H1 (cell line): ENCODE measurements at regions of chr17 and their contacts with region 1.

Region 1: DNA sequence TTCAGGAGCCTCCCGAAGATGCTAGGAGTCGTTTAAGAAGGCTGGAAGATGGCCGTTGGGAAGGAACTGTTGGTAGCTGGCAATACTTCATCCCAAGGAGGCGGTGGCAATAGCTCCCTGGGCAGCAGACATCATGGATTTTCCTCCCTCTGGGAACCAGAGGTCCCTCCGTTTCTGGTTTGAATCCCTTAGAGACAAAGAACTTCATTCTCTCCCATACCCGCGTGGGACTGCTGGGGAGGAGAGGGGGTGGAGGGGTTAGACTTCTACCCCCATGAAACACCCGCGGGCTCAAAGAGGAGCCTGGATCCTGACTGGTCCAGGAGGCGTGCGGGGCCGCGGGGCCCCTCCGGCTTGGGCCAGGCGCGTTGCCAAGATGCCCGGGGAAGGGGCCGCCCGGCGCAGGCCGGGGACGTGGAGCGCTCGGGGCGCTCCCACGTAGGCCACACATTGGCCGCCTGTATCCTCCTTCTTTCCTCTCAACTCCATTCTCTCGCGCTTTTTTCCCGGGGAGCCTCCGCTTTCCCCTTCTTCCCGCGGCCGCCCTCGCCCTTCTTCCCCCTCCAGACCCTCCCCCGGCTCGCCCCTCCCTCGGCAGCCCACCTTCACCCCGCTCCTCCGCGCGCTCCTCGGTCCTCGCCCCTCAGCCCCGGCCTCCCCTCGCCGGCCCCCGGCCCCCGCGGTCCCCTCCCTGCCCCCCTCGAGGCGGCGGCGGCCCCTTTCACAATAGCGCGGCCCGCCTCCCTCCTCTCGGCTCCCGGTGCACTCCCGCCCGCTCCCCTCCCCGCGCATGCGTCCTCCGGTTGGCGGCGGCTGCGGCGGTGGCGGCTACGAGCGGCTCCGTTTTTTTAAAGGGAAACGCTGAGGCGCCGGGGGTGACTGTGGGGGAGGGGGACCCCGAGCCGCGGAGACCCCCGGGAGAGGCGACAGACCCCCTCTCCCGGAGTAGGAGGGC is at the start of gene MSL1:
- DNase-seq: peak in 1 of 2 experiments; percentile 88
- H3K4me3 ChIP-seq: peak within 1 kb of the TSS; percentile 80 to 91 (median 86)
- H3K27ac ChIP-seq: peak within 1 kb of the TSS; percentile 84
- H3K4me1 ChIP-seq: peaks cover 0 to 3% (median under 1%) of the 10 kb centered on the region in 4 experiments; a peak in 2 of 7 replicates
- H3K27me3 ChIP-seq: no peaks in the 10 kb centered on the region; a peak in 1 of 7 replicates
- CTCF ChIP-seq: no peak
- EP300 ChIP-seq: 0 out of 3 replicates have a peak, but pooled peaks of 1 of the 2 experiments have one; percentile 8
- POLR2A ChIP-seq: peak in 1 of 2 experiments; percentile 37; a peak in 1 of 3 replicates
- RAD21 ChIP-seq: no peak
- total RNA-seq, gene MSL1: 66.5 and 69.2 TPM in 2 replicates

Region 2: GRCh38 chr17:40062329-40063186 is 58.9 kb before region 1 on chr17 and contains the start of gene THRA:
- CTCF ChIA-PET with region 1: interaction called, 4 read pairs
- POLR2A ChIA-PET with region 1: interaction called, 17 read pairs
- DNase-seq: peak in 1 of 2 experiments; percentile 89
- H3K4me3 ChIP-seq: peak within 1 kb of the TSS; percentile 78 to 87 (median 81)
- H3K27ac ChIP-seq: peak within 1 kb of the TSS; percentile 60; the same call in 1 of the 2 replicates
- H3K4me1 ChIP-seq: peaks cover 21 to 46% (median 31%) of the 10 kb centered on the region in 4 experiments
- H3K27me3 ChIP-seq: peaks cover 0 to 15% (median 10%) of the 10 kb centered on the region in 4 experiments; a peak in 6 of 7 replicates
- CTCF ChIP-seq: no peak; a peak in 1 of 4 replicates
- EP300 ChIP-seq: no peak
- POLR2A ChIP-seq: no peak
- RAD21 ChIP-seq: no peak
- total RNA-seq, gene THRA: 10.2 and 11.8 TPM in 2 replicates

Region 3: GRCh38 chr17:40139566-40140058 is 18.2 kb after region 1 on chr17:
- CTCF ChIA-PET with region 1: interaction called, 135 read pairs
- POLR2A ChIA-PET with region 1: interaction called, 90 read pairs
- DNase-seq: no peak
- H3K4me3 ChIP-seq: peak overlapping the region; percentile 51 to 88 (median 68)
- H3K27ac ChIP-seq: peak overlapping the region; percentile 84
- H3K4me1 ChIP-seq: peaks cover 0 to 4% (median 1%) of the 10 kb centered on the region in 4 experiments; a peak in 2 of 7 replicates
- H3K27me3 ChIP-seq: no peaks in the 10 kb centered on the region
- CTCF ChIP-seq: no peak
- EP300 ChIP-seq: no peak
- POLR2A ChIP-seq: no peak
- RAD21 ChIP-seq: no peak

Region 4: DNA sequence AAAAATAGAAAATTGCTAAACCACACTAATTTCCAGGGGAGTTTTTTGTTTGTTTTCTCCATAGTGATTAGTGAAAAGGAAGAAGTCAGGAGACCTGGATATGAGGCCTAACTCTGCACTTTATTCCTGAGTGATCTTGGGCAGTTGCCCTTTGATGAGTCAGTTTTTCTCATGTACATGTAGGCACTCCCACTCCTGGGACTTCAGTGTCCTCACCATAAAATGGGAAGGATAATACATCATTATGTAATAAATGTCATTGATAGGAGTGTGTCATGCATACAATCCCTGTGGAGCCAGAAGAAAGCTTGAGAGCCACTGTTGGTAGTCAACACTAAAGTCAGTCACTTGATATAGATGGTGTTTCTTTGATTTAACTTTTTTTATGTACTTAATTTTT is 130.1 kb after region 1 on chr17:
- CTCF ChIA-PET with region 1: no interaction called
- POLR2A ChIA-PET with region 1: no interaction called
- DNase-seq: no peak
- H3K4me3 ChIP-seq: no peak overlapping the region
- H3K27ac ChIP-seq: no peak overlapping the region
- H3K4me1 ChIP-seq: no peaks in the 10 kb centered on the region
- H3K27me3 ChIP-seq: no peaks in the 10 kb centered on the region
- CTCF ChIP-seq: no peak
- EP300 ChIP-seq: no peak
- POLR2A ChIP-seq: no peak
- RAD21 ChIP-seq: no peak